MCF 10A (cell line): ENCODE measurements at regions of chr1 and their contacts with region 1.

Region 1: DNA sequence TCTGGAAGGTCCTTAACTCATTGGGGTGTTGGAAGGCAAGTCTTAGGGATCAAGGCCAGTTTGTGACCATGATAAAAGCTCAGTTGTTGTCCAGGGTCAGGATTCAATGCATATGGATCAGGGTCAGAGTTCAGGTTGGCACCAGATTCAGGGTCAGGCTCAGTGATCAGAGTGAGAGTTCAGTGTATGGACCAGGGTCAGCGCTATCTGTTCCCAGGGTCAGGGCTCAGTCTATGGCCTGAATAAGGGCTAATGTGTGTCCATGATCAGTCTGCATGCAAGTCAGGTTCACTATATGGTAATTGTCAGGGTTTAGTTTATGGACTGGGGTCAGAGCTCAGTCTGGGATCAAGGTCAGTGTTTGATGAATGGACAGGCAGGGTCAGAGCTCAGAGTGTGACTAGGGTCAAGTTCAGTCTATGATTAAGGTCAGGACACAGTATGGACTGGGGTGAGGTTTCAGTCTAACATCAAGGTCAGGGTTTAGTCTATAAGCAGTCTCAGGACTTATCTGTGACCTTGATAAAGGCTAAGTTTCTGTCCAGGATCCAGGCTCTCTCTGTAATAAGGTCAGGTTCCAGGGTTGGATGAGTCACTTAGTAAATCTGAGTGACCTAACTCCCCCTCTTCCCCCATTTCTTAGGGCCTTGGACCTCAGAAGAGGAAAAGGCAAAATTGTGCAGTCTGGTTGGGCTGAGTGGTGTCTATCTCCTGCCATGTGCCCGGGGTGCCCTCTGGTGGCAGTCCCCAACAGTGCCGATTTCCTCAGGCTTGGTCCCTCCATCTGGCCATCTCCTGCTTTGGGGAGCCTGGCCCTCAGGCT is 23.8 kb downstream of the KNCN start:
- DNase-seq: peak; percentile 84
- H3K4me3 Mint-ChIP-seq: no peak overlapping the region
- H3K27ac Mint-ChIP-seq: no peak overlapping the region
- H3K4me1 Mint-ChIP-seq: peaks cover 16% of the 10 kb centered on the region
- H3K27me3 Mint-ChIP-seq: peaks cover 14% of the 10 kb centered on the region
- CTCF ChIP-seq: peak; percentile 92

Region 2: DNA sequence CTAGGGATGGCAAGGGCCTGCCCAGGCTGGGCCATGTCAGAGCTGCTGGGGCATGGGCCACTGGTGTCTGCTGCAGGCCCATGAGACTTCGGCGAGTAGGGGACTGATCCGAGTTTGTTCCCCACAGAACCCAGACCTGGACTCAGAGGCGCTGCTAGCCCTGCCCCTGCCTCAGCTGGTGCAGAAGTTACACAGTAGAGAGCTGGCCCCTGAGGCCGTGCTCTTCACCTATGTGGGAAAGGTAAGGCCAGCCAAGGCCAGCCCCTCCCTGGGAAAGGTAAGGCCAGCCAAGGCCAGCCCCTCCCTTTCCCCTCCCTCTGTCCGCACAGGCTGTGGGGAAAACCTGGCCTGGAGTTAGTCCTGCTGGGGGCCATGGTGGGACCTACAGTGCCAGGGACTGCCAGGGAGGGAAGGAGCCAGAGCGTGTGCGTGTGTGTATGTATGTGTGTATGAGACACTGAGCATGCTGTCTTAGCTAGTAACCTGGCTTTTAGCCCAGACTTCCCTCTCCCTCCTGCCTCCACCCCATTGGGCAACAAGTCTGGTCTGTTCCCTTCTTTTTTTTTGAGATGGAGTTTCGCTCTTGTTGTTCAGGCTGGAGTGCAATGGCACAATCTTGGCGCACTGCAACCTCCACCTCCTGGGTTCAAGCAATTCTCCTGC is 125.6 kb before region 1 on chr1:
- CTCF ChIA-PET with region 1: interaction called, 10 read pairs
- POLR2A ChIA-PET with region 1: interaction called, 5 read pairs
- intact Hi-C with region 1: loop called (anchors 1 kb)
- DNase-seq: peak; percentile 97
- H3K4me3 Mint-ChIP-seq: peak overlapping the region; percentile 23
- H3K27ac Mint-ChIP-seq: no peak overlapping the region
- H3K4me1 Mint-ChIP-seq: peaks cover 7% of the 10 kb centered on the region
- H3K27me3 Mint-ChIP-seq: no peaks in the 10 kb centered on the region
- CTCF ChIP-seq: no peak

Region 3: DNA sequence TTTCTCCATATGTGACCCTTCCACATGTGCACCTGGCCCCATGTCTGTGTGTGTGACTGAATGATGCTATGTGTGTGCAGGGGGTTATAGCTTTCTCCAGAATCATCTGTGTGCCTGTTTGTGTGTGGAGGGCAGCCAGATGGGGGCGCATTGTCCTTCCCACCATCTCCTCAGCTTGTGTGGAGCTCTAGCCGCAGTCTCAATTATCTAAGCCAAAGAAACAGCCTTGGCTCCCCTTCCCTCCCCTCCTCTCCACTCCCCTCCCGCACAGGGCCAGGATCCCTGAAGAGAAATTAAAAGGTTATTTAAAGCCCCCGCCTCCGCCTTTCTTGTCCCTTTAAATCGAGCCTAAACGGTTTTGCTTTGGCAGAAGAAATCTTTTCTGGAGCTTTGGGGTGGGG is 39.9 kb before region 1 on chr1:
- CTCF ChIA-PET with region 1: interaction called, 223 read pairs
- POLR2A ChIA-PET with region 1: interaction called, 3 read pairs
- intact Hi-C with region 1: no loop called
- DNase-seq: peak; percentile 35
- H3K4me3 Mint-ChIP-seq: no peak overlapping the region
- H3K27ac Mint-ChIP-seq: no peak overlapping the region
- H3K4me1 Mint-ChIP-seq: peaks cover 12% of the 10 kb centered on the region
- H3K27me3 Mint-ChIP-seq: peaks cover 52% of the 10 kb centered on the region
- CTCF ChIP-seq: no peak

Region 4: DNA sequence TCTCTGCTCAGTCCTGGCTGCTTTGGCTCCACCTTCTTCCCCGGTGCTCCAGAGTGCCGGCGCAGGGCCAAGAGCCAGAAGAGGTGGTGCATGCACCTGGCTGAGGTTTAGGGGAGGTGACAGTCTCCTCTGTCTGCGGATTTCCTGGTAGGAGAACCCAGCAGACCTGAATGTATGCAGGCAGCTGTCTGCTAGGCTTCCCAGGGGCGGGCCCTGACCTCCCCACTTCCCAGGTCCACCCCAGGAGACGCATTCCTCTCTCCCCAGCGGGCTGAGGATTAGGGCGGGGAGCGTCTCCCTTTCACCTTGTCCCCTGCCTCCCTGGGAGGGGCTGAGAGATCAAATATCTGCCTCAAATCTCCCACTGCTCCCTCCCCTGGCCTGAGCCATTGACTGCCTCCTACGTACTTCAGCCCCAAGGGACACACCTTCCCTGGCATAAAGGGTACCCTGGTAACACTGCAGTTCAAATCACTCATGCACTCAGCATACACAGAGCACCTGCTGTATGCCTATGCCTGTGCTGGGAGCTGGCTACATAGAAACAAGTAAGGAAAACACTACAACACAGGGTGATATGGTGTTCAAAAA is 10.6 kb before region 1 on chr1:
- CTCF ChIA-PET with region 1: interaction called, 17 read pairs
- POLR2A ChIA-PET with region 1: no interaction called
- intact Hi-C with region 1: no loop called
- DNase-seq: peak; percentile 88
- H3K4me3 Mint-ChIP-seq: no peak overlapping the region
- H3K27ac Mint-ChIP-seq: no peak overlapping the region
- H3K4me1 Mint-ChIP-seq: peaks cover 37% of the 10 kb centered on the region
- H3K27me3 Mint-ChIP-seq: no peaks in the 10 kb centered on the region
- CTCF ChIP-seq: no peak

Region 5: DNA sequence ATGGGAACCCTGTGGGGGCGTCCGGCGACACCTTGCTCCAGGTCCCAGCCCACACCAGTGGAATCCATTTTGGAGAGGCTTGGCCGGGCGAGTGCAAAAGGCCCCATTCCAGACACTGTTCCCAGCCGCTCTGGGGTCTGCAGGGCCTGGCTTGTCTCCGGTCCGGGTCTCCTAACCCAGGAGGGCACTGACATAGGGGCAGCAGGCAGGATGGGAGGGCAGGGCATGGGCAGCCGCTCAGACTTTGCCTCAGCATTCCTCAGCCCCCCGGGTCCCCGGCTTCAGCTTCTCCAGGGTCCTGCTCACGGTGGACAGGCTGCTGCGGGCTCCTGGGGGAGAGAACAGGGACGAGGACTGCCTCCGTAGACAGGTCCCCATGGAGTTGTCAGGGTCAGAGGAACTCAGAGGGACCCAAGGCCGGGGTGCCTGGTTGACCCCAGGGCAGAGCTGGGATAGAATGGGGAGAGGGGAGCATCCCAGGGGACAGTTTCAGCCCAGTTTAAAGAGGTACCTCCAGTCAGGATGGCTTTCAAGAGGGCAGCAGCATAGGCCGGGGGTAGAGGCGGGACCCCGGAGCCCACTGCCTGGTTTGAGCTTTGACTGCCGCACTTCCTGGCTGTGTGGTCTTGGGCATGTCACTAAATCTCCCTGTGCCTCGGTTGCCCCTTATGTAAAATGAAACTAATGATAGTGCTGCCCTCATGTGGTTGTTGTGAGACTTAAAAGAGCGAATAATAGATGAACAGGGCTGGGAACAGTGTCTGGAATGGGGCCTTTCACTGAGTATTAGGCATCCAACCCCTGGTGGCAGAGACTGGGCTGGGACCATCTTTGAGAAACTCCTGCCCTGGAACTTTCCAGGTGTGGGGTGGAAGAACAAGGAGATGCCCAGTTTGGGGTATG is 20.0 kb after region 1 on chr1:
- CTCF ChIA-PET with region 1: interaction called, 68 read pairs
- POLR2A ChIA-PET with region 1: no interaction called
- intact Hi-C with region 1: no loop called
- DNase-seq: peak; percentile 73
- H3K4me3 Mint-ChIP-seq: no peak overlapping the region
- H3K27ac Mint-ChIP-seq: no peak overlapping the region
- H3K4me1 Mint-ChIP-seq: peaks cover under 1% of the 10 kb centered on the region
- H3K27me3 Mint-ChIP-seq: peaks cover 39% of the 10 kb centered on the region
- CTCF ChIP-seq: peak; percentile 66